MCF 10A (cell line): ENCODE measurements at regions of chr20 and their contacts with region 1.

Region 1: DNA sequence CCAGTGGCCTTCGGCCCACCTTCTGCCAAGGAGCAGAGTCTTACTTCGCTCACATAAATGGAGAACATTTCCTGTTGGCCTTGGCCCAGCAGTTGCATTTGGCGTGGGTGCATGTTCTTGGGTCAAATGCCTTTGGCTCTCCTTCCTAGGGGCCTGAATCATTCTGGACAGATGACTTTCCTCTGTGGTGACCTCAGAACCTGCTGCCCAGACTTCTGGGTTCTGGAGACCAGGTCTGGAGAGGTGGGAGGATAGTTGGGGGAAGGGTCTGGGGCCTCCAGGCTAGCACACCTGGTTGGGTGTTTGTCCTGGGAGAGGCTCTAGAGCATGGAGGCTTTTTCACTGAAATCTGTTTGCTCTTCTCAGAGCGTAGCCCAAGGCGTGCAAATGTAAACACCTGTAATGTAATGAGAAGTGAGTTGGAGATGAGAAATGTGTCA is 29.4 kb downstream of the BCAS4 start:
- DNase-seq: peak; percentile 89
- H3K4me3 Mint-ChIP-seq: no peak overlapping the region
- H3K27ac Mint-ChIP-seq: peak overlapping the region; percentile 40
- H3K4me1 Mint-ChIP-seq: peaks cover 9% of the 10 kb centered on the region
- H3K27me3 Mint-ChIP-seq: no peaks in the 10 kb centered on the region
- CTCF ChIP-seq: no peak

Region 2: GRCh38 chr20:50837532-50838506 is 13.6 kb after region 1 on chr20:
- CTCF ChIA-PET with region 1: interaction called, 3 read pairs
- POLR2A ChIA-PET with region 1: interaction called, 14 read pairs
- intact Hi-C with region 1: no loop called
- DNase-seq: peak; percentile 74
- H3K4me3 Mint-ChIP-seq: peak overlapping the region; percentile 47
- H3K27ac Mint-ChIP-seq: peak overlapping the region; percentile 93
- H3K4me1 Mint-ChIP-seq: peaks cover 21% of the 10 kb centered on the region
- H3K27me3 Mint-ChIP-seq: no peaks in the 10 kb centered on the region
- CTCF ChIP-seq: no peak

Region 3: GRCh38 chr20:51265361-51265760 is 441.1 kb after region 1 on chr20:
- CTCF ChIA-PET with region 1: no interaction called
- POLR2A ChIA-PET with region 1: no interaction called
- intact Hi-C with region 1: no loop called
- DNase-seq: no peak
- H3K4me3 Mint-ChIP-seq: no peak overlapping the region
- H3K27ac Mint-ChIP-seq: no peak overlapping the region
- H3K4me1 Mint-ChIP-seq: no peaks in the 10 kb centered on the region
- H3K27me3 Mint-ChIP-seq: no peaks in the 10 kb centered on the region
- CTCF ChIP-seq: no peak